ENCODE measurements at regions of chr12 and their contacts with region 1.

Region 1: DNA sequence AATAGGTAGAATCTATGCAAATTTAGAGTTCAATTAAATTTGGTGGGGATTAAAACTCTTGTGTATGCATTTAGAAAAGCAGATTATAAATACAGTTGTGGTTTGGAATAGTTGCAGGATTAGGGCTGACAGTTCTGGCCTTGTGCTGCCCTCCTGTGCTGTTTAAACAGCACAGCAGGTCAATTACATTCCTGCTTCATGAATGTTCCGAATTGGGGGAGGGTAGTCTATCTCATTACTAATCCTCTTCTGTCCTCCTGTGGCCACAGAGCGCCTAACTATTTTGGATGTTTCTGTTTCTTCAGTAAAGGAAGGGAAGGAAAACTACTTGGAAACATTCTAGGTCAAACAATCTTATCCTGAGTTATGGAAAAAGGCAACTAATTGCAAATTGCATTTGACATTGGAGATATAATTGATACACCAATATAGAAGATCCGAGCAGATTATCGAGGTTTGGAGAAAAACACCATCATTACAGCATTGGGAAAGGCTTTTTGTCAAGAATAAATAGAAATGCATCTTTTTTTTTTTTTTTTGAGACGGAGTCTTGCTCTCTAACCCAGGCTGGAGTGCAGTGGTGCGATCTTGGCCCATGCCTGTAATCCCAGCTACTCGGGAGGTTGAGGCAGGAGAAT is 8.7 kb upstream of the GPR19 start:
- DNase-seq: peak; percentile 65 to 83
- H3K4me3 ChIP-seq: no peak overlapping the region
- H3K27ac ChIP-seq: no peak overlapping the region
- H3K4me1 ChIP-seq: peaks cover 12% of the 10 kb centered on the region
- H3K27me3 ChIP-seq: no peaks in the 10 kb centered on the region
- CTCF ChIP-seq: peak; percentile 91

Region 2: DNA sequence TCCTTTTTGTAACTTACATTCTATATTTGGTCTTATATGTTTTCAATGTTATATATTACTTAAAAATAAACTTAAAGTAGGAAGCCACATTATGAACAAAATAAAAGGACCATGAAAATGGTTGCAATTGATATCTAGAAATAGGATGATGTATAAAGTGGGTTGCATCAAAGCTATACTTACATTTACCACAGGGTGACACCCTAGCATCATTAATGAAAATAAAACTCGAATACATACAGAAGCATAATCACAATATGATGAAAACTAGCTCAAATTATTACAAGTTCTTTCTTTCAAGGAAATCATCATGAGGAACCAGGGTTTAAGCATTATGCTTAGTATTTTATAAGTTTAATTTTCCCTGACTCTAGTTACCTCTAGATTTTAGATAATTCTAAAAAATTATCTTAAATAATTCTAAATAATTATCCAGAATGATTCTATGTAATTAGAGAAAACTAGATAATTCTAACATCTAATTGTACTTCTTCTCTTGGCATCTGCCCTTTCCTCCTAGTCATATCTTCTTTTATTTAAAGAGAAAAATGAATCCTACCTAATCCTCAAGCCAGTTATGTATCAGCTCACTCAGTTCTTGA is 1933.5 kb before region 1 on chr12:
- CTCF ChIA-PET with region 1: interaction called, 4 read pairs
- POLR2A ChIA-PET with region 1: no interaction called
- intact Hi-C with region 1: loop called (anchors 2 kb)
- DNase-seq: no peak
- H3K4me3 ChIP-seq: no peak overlapping the region
- H3K27ac ChIP-seq: no peak overlapping the region
- H3K4me1 ChIP-seq: no peaks in the 10 kb centered on the region
- H3K27me3 ChIP-seq: peaks cover 20% of the 10 kb centered on the region; the same call in 1 of the 2 replicates
- CTCF ChIP-seq: peak; percentile 85

Region 3: GRCh38 chr12:11500178-11500860 is 1204.4 kb before region 1 on chr12:
- CTCF ChIA-PET with region 1: no interaction called
- POLR2A ChIA-PET with region 1: no interaction called
- intact Hi-C with region 1: loop called (anchors 2 kb)
- DNase-seq: peak in 1 of 2 experiments; percentile 90
- H3K4me3 ChIP-seq: no peak overlapping the region
- H3K27ac ChIP-seq: no peak overlapping the region
- H3K4me1 ChIP-seq: no peaks in the 10 kb centered on the region
- H3K27me3 ChIP-seq: no peaks in the 10 kb centered on the region
- CTCF ChIP-seq: no peak

Region 4: GRCh38 chr12:11581179-11581755 is 1123.4 kb before region 1 on chr12:
- CTCF ChIA-PET with region 1: no interaction called
- POLR2A ChIA-PET with region 1: no interaction called
- intact Hi-C with region 1: loop called (anchors 1 kb)
- DNase-seq: peak; percentile 56 to 82
- H3K4me3 ChIP-seq: no peak overlapping the region
- H3K27ac ChIP-seq: peak overlapping the region; percentile 94
- H3K4me1 ChIP-seq: peaks cover 49% of the 10 kb centered on the region
- H3K27me3 ChIP-seq: no peaks in the 10 kb centered on the region
- CTCF ChIP-seq: peak; percentile 84

Region 5: DNA sequence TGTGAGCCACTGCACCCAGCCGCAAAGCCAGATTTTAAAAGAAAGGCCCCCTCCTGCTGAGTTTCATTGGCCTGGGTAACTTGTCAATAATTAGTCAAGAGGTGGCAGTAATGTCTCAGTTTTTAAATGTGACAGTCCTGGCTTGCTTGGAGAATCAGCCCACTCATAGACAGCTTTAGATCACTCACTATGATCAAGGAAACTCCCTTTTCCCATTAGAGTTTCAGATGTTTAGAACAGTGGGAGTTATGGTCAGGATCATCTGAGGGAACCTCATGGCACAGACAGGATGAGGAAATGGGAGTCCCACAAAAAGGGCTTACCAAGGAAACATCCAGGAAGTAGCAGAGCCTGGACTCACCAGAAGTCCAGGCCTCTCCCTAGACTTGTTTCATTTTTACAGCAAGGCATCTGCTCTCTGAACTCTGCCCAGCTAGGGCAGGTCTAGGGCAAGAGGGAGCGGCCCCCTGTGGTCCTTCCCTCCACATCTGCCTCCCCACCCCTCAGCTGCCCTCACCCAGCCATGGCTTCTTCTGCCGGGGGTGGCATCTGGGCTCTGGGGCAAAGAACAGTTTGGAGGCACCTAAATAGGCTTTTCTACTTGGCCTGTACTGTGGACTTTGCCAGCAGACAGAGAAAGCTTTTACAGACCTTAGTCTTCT is 622.7 kb before region 1 on chr12:
- CTCF ChIA-PET with region 1: interaction called, 4 read pairs
- POLR2A ChIA-PET with region 1: no interaction called
- intact Hi-C with region 1: loop called (anchors 1 kb)
- DNase-seq: peak; percentile 24 to 40
- H3K4me3 ChIP-seq: no peak overlapping the region
- H3K27ac ChIP-seq: no peak overlapping the region
- H3K4me1 ChIP-seq: no peaks in the 10 kb centered on the region
- H3K27me3 ChIP-seq: no peaks in the 10 kb centered on the region
- CTCF ChIP-seq: no peak; the same call in 1 of the 2 replicates

Region 6: DNA sequence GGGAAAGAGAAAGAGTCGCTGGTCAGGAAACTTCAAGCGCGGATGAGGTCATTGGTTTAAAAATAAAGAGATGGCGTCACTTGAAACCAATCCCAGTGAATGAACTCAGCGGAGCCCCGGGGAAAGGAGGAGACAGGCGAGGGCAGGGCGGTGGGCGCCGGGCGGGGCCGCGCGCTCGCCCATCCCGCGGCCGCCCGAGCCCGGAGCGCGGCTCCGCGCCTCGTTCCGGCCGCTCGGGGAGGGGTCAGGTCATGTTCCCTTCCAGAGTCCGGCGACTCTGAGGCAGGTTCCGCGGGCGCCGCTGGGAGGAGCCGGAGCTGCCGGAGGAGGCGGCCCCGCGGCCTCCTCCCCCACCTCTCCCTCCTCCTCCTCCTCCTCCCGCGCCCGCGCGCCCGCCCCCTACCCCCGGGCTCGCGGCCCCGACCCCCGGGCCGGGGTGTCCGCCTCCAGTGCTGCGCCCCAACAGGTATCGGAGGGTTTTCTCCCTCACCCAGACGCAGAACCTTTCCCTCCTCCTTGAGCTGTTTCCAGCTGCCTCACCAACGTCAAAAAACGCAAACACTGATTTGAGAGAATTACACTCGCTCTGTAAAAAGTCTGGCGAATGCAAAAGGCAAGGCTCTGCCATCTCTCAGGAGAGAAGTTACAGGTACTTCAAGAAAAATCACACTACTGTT is 142.0 kb before region 1 on chr12 and contains the start of gene DUSP16:
- CTCF ChIA-PET with region 1: no interaction called
- POLR2A ChIA-PET with region 1: no interaction called
- intact Hi-C with region 1: loop called (anchors 5 kb)
- DNase-seq: peak; percentile 90 to 99
- H3K4me3 ChIP-seq: peak within 1 kb of the TSS; percentile 73
- H3K27ac ChIP-seq: peak within 1 kb of the TSS; percentile 92
- H3K4me1 ChIP-seq: peaks cover 25% of the 10 kb centered on the region
- H3K27me3 ChIP-seq: no peaks in the 10 kb centered on the region
- CTCF ChIP-seq: peak; percentile 36; the same call in 1 of the 2 replicates
- total RNA-seq, gene DUSP16: 23.6 and 24.8 TPM in 2 replicates

Region 7: GRCh38 chr12:12661086-12661485 is 43.6 kb before region 1 on chr12:
- CTCF ChIA-PET with region 1: no interaction called
- POLR2A ChIA-PET with region 1: no interaction called
- intact Hi-C with region 1: loop called (anchors 1 kb)
- DNase-seq: no peak
- H3K4me3 ChIP-seq: no peak overlapping the region
- H3K27ac ChIP-seq: no peak overlapping the region
- H3K4me1 ChIP-seq: no peaks in the 10 kb centered on the region
- H3K27me3 ChIP-seq: no peaks in the 10 kb centered on the region
- CTCF ChIP-seq: no peak

Region 8: DNA sequence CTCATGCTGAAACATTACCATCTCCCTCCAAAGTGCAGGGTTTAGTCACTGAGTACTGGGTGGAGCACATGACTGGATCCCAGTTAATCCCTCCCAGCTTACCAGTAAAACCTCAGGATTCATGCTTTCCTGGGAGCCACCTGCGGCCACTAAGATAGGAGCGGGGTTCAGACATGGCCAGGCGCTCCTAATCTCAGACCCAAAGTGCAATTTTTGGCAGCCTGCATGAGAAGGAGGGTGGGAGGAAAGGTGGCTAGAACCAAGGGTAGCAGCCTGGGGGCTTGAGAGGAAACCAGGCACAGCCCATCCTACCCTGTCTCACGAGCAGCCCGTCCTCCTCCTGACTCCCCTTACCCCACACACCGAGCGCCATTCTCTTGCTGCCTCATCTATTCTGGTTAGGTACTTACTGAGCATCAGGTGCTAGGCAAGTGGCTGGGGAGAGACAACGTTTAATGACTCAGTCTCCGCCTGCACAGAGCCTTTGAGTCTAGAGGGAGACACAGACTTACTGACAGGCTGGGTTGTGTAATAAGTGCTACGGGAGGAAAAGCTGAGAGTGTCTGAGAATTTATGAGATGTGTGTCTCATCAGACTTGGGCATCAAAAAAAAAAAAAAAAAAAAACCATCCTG is 196.6 kb after region 1 on chr12:
- CTCF ChIA-PET with region 1: no interaction called
- POLR2A ChIA-PET with region 1: no interaction called
- intact Hi-C with region 1: no loop called
- DNase-seq: peak; percentile 60 to 86
- H3K4me3 ChIP-seq: peak overlapping the region; percentile 19; the same call in 1 of the 2 replicates
- H3K27ac ChIP-seq: peak overlapping the region; percentile 76
- H3K4me1 ChIP-seq: peaks cover 84% of the 10 kb centered on the region
- H3K27me3 ChIP-seq: no peaks in the 10 kb centered on the region
- CTCF ChIP-seq: no peak

Measured in PC-9 (cell line).